Left colon (tissue), 2 donors: ENCODE measurements at regions of chr3 and their contacts with region 1.

Region 1: GRCh38 chr3:112984485-112984884 is 6.3 kb upstream of the GTPBP8 start:
- DNase-seq: no peak
- ATAC-seq: no peak

Region 2: GRCh38 chr3:112582244-112582874 is 402.1 kb before region 1 on chr3:
- intact Hi-C with region 1: loop called in 1 of 2 experiments (anchors 5 kb)
- DNase-seq: no peak
- ATAC-seq: no peak

Region 3: DNA sequence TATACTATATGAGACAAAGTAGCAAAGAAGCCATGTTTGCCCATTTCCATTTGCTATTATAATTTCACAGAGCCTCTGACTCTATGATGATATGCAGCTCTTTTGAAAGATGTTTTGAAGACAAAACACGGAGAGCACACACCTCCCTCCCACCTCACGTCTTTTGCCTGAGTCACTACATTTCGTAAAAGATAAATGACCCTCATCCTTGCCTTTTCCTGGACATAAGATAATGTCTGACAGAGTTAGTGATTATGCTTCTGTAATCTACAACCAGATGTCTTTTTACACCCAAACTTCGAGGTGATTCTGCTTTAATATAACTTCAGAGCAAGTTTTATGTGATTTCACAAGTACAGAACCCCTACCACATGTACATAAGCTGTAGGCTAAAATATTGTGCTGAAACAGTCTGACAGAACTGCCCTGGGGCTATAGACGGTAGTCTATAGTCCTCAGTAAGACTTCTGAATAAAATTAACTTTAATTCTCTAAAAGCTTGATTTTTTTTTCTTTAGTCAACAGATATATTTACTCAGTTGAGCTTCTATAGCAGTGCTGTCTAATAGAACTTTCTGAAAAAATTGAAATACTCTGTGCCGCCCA is 237.7 kb before region 1 on chr3:
- intact Hi-C with region 1: no loop called
- DNase-seq: no peak
- ATAC-seq: no peak